Activated CD8-positive, alpha-beta T cell treated with anti-CD3 and anti-CD28 coated beads for 36 hours (primary cell): ENCODE measurements at regions of chr1 and their contacts with region 1.

Region 1: GRCh38 chr1:100351095-100351891 is 1.0 kb upstream of the CDC14A start:
- DNase-seq: peak; percentile 91
- ATAC-seq: peak; percentile 67
- H3K4me3 Mint-ChIP-seq: peak overlapping the region; percentile 97
- H3K27ac Mint-ChIP-seq: peak overlapping the region; percentile 98
- H3K4me1 Mint-ChIP-seq: peaks cover 28% of the 10 kb centered on the region
- H3K27me3 Mint-ChIP-seq: no peaks in the 10 kb centered on the region
- CTCF ChIP-seq: peak; percentile 1

Region 2: GRCh38 chr1:100132566-100133477 is 218.5 kb before region 1 on chr1 and contains the starts of genes SASS6 and TRMT13:
- CTCF ChIA-PET with region 1: no interaction called
- POLR2A ChIA-PET with region 1: no interaction called
- intact Hi-C with region 1: loop called (anchors 10 kb)
- DNase-seq: peak; percentile 98
- ATAC-seq: peak; percentile 95
- H3K4me3 Mint-ChIP-seq: peak within 1 kb of the TSS; percentile 89
- H3K27ac Mint-ChIP-seq: peak within 1 kb of the TSS; percentile 96
- H3K4me1 Mint-ChIP-seq: peaks cover 37% of the 10 kb centered on the region
- H3K27me3 Mint-ChIP-seq: no peaks in the 10 kb centered on the region
- CTCF ChIP-seq: no peak
- total RNA-seq, gene SASS6: 12.9 to 13.6 TPM
- total RNA-seq, gene TRMT13: 15.5 to 17.5 TPM

Region 3: DNA sequence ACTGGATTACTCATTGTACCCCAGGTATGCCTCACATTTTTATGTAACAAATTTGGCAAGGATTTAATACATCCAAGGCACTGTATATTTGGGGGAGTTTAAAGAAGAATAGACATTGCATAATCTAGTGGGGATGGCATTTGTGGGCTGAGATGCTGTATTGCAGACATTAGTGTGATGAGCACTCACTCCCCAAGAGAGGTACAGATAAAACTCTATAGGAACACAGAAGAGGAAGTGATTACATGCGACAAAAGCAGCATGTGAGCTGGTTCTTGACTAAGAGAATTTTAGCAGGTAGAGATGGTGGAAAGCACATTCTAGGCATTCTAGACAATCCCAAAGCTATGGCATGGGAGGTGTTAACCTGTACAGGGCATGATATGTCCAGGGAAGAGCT is 23.2 kb before region 1 on chr1:
- CTCF ChIA-PET with region 1: no interaction called
- POLR2A ChIA-PET with region 1: no interaction called
- intact Hi-C with region 1: no loop called
- DNase-seq: no peak
- ATAC-seq: no peak
- H3K4me3 Mint-ChIP-seq: no peak overlapping the region
- H3K27ac Mint-ChIP-seq: no peak overlapping the region
- H3K4me1 Mint-ChIP-seq: peaks cover 3% of the 10 kb centered on the region
- H3K27me3 Mint-ChIP-seq: no peaks in the 10 kb centered on the region
- CTCF ChIP-seq: no peak

Region 4: DNA sequence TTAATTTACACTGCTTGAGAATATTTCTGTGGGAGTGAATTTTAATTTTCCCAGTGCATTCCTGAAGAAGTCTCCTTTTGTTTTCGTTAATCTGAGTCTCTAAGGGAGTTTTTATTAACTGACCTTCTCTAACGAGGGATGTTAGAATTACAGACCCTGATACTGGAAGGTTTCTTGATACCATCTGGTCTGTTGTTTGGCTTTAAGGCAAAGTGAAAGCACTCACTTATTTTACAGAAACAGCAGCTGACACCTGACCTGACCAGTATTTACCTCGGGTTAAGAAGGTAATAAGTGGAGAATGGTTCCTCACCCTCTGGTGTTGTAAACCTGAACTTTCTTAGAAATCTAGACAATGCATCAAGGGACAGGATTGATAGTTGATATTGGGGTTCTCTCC is 13.4 kb after region 1 on chr1:
- CTCF ChIA-PET with region 1: interaction called, 26 read pairs
- POLR2A ChIA-PET with region 1: interaction called, 21 read pairs
- intact Hi-C with region 1: no loop called
- DNase-seq: no peak
- ATAC-seq: no peak
- H3K4me3 Mint-ChIP-seq: peak overlapping the region; percentile 28
- H3K27ac Mint-ChIP-seq: peak overlapping the region; percentile 77
- H3K4me1 Mint-ChIP-seq: peaks cover 70% of the 10 kb centered on the region
- H3K27me3 Mint-ChIP-seq: no peaks in the 10 kb centered on the region
- CTCF ChIP-seq: no peak

Region 5: GRCh38 chr1:100443811-100444571 is 92.7 kb after region 1 on chr1:
- CTCF ChIA-PET with region 1: interaction called, 7 read pairs
- POLR2A ChIA-PET with region 1: interaction called, 14 read pairs
- intact Hi-C with region 1: loop called (anchors 5 kb)
- DNase-seq: peak; percentile 49
- ATAC-seq: peak; percentile 76
- H3K4me3 Mint-ChIP-seq: peak overlapping the region; percentile 72
- H3K27ac Mint-ChIP-seq: peak overlapping the region; percentile 95
- H3K4me1 Mint-ChIP-seq: peaks cover 78% of the 10 kb centered on the region
- H3K27me3 Mint-ChIP-seq: no peaks in the 10 kb centered on the region
- CTCF ChIP-seq: no peak